ENCODE measurements at regions of chr22 and their contacts with region 1.

Region 1: GRCh38 chr22:50250555-50251476 is at the start of gene HDAC10:
- DNase-seq: peak; percentile 60 to 90
- ATAC-seq: peak; percentile 58 to 64 (median 64)
- H3K4me3 ChIP-seq: peak within 1 kb of the TSS; percentile 80
- H3K4me3 Mint-ChIP-seq: peak within 1 kb of the TSS; percentile 74
- H3K27ac ChIP-seq: peak within 1 kb of the TSS; percentile 68
- H3K27ac Mint-ChIP-seq: peak within 1 kb of the TSS in 1 of 2 donors; percentile 62
- H3K4me1 ChIP-seq: peaks cover 52% of the 10 kb centered on the region
- H3K4me1 Mint-ChIP-seq: peaks cover 0 to 17% of the 10 kb centered on the region in 2 donors
- H3K27me3 ChIP-seq: no peaks in the 10 kb centered on the region
- H3K27me3 Mint-ChIP-seq: no peaks in the 10 kb centered on the region
- CTCF ChIP-seq: no peak
- total RNA-seq, gene HDAC10: 112 to 131 (median 123) TPM

Region 2: DNA sequence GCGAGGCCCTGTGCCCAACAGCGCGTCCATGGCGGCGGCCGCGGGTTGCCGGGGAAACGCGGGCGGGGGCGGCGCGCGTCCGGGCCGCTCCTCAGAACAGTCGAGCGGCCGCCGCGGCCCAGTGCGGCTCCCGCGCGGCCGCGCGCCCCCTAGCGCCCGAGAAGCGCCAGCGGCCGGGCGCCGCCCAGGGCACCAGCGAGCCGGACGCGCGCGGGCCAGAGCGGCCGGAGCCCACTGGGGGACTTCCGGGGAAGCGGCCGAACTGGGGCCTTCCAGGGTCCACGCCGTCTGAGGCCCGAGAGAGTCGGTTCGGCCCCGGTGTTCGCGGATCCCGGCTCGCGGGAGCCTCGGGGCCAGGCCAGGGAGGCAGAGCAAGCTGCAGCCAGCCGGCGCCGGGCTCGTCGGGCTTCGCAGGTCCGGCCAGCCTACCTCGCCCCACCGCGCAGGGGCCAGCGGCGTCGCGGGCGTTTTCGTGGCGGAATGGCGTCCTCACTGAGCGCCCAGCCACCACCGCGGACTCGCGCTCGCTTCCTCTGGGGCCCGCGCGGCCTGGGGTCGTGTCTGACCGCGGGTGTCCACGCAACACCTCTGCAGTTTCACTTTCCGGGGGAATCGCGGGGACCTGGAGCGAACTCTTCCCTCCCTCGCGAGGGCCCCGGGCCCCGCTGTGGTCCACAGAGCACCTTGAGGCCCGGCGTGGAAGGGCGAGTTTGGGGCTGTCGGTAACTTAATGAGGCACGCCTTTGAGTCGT is 76.3 kb after region 1 on chr22 and contains the start of gene DENND6B:
- intact Hi-C with region 1: loop called (anchors 5 kb)
- DNase-seq: peak; percentile 71 to 87
- ATAC-seq: peak; percentile 94 to 97 (median 96)
- H3K4me3 ChIP-seq: peak within 1 kb of the TSS; percentile 60
- H3K4me3 Mint-ChIP-seq: peak within 1 kb of the TSS; percentile 89
- H3K27ac ChIP-seq: peak within 1 kb of the TSS; percentile 88
- H3K27ac Mint-ChIP-seq: peak within 1 kb of the TSS; percentile 54 to 81
- H3K4me1 ChIP-seq: peaks cover 17% of the 10 kb centered on the region
- H3K4me1 Mint-ChIP-seq: peaks cover 0 to 13% of the 10 kb centered on the region in 2 donors
- H3K27me3 ChIP-seq: no peaks in the 10 kb centered on the region
- H3K27me3 Mint-ChIP-seq: no peaks in the 10 kb centered on the region
- CTCF ChIP-seq: peak; percentile 50
- total RNA-seq, gene DENND6B: 3.1 to 5.0 (median 4.5) TPM

Region 3: GRCh38 chr22:50341977-50342650 is 91.3 kb after region 1 on chr22:
- intact Hi-C with region 1: loop called (anchors 2 kb)
- DNase-seq: peak; percentile 84 to 93
- ATAC-seq: peak; percentile 62 to 77 (median 66)
- H3K4me3 ChIP-seq: peak overlapping the region; percentile 56
- H3K4me3 Mint-ChIP-seq: peak overlapping the region; percentile 83
- H3K27ac ChIP-seq: peak overlapping the region; percentile 68
- H3K27ac Mint-ChIP-seq: no peak overlapping the region
- H3K4me1 ChIP-seq: peaks cover 29% of the 10 kb centered on the region
- H3K4me1 Mint-ChIP-seq: peaks cover 0 to 12% of the 10 kb centered on the region in 2 donors
- H3K27me3 ChIP-seq: no peaks in the 10 kb centered on the region
- H3K27me3 Mint-ChIP-seq: no peaks in the 10 kb centered on the region
- CTCF ChIP-seq: peak; percentile 98

Region 4: DNA sequence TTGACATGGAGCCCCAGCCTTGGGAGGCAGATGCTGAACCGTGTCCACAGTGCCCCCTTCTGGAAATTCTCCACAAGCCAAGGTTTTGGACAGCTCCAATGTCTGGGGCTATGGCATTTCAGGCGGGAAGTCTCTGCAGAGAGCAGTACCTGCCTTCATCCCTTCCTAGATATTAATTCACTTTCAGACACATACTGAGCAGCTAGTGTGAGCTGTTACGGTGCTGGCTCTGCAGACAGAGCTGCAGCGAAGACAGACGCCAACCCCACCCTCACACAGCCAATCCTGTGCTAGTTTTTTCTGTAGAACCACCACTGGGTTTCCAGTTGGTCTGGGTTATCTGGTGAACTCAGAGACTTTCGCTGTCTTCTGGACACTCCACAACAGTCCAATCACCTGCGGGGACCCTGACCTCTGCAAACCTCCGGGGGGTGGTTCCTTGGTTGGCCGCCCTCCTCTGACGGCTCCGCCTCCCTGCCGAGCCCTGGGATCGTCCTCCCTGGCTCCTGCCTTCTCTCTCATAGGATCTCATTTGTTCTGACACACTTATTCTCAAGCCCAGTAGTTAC is 247.6 kb after region 1 on chr22:
- intact Hi-C with region 1: loop called (anchors 5 kb)
- DNase-seq: peak; percentile 50 to 87
- ATAC-seq: peak; percentile 80 to 96 (median 95)
- H3K4me3 ChIP-seq: no peak overlapping the region
- H3K4me3 Mint-ChIP-seq: no peak overlapping the region
- H3K27ac ChIP-seq: no peak overlapping the region
- H3K27ac Mint-ChIP-seq: no peak overlapping the region
- H3K4me1 ChIP-seq: peaks cover 6% of the 10 kb centered on the region
- H3K4me1 Mint-ChIP-seq: no peaks in the 10 kb centered on the region
- H3K27me3 ChIP-seq: no peaks in the 10 kb centered on the region
- H3K27me3 Mint-ChIP-seq: peaks cover 0 to 7% of the 10 kb centered on the region in 2 donors
- CTCF ChIP-seq: peak; percentile 64

Region 5: GRCh38 chr22:50691521-50691920 is 440.7 kb after region 1 on chr22:
- intact Hi-C with region 1: loop called (anchors 5 kb)
- DNase-seq: peak in 1 of 2 donors; percentile 69
- ATAC-seq: no peak
- H3K4me3 ChIP-seq: no peak overlapping the region
- H3K4me3 Mint-ChIP-seq: no peak overlapping the region
- H3K27ac ChIP-seq: no peak overlapping the region
- H3K27ac Mint-ChIP-seq: no peak overlapping the region
- H3K4me1 ChIP-seq: peaks cover 5% of the 10 kb centered on the region
- H3K4me1 Mint-ChIP-seq: no peaks in the 10 kb centered on the region
- H3K27me3 ChIP-seq: no peaks in the 10 kb centered on the region
- H3K27me3 Mint-ChIP-seq: peaks cover 13 to 18% of the 10 kb centered on the region in 2 donors
- CTCF ChIP-seq: peak; percentile 47

Measured in natural killer cell (primary cell).